T-cell (primary cell): ENCODE measurements at regions of chr14 and their contacts with region 1.

Region 1: DNA sequence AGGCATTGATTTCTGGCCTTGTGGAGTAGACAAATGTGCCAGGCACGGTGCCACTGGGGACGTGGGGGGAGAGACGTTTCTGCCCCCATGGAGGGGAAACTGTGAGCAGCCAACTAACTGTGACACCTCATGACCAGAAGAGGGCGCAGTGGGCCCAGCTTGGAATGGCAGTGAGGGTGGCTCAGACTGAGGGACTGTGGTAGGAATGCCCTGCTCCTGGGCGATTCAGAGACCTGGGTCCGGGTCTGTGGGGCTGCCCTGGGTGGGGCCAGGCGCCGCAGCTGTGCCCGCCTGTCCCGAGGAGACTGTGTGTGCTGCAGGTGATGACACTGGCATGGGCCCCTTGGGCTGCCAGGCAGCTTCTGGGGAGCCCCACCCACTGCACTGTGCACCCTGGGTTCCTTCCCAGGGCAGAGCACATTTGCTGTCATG is 60.6 kb downstream of the SLC25A47 start:
- DNase-seq: peak; percentile 24 to 83 (median 59)
- ATAC-seq: peak; percentile 83 to 89 (median 86)
- H3K4me3 ChIP-seq: no peak overlapping the region
- H3K4me3 Mint-ChIP-seq: no peak overlapping the region
- H3K27ac ChIP-seq: no peak overlapping the region
- H3K27ac Mint-ChIP-seq: no peak overlapping the region
- H3K4me1 ChIP-seq: peaks cover 0 to 13% of the 10 kb centered on the region in 2 experiments
- H3K4me1 Mint-ChIP-seq: peaks cover 17 to 28% (median 25%) of the 10 kb centered on the region in 3 donors
- H3K27me3 ChIP-seq: no peaks in the 10 kb centered on the region
- H3K27me3 Mint-ChIP-seq: no peaks in the 10 kb centered on the region

Region 2: GRCh38 chr14:100653409-100653808 is 269.7 kb after region 1 on chr14:
- CTCF ChIA-PET with region 1: interaction called, 4 to 12 read pairs
- POLR2A ChIA-PET with region 1: no interaction called
- DNase-seq: peak in 24 of 35 experiments; percentile 7 to 60 (median 25)
- ATAC-seq: no peak
- H3K4me3 ChIP-seq: no peak overlapping the region
- H3K4me3 Mint-ChIP-seq: no peak overlapping the region
- H3K27ac ChIP-seq: no peak overlapping the region
- H3K27ac Mint-ChIP-seq: no peak overlapping the region
- H3K4me1 ChIP-seq: peaks cover 0 to 23% of the 10 kb centered on the region in 2 experiments
- H3K4me1 Mint-ChIP-seq: peaks cover 6 to 8% (median 7%) of the 10 kb centered on the region in 3 donors
- H3K27me3 ChIP-seq: peaks cover 0 to 49% of the 10 kb centered on the region in 2 experiments
- H3K27me3 Mint-ChIP-seq: peaks cover 11 to 21% of the 10 kb centered on the region in 2 donors